Tibial artery (tissue), 4 donors: ENCODE measurements at regions of chr16 and their contacts with region 1.

Region 1: GRCh38 chr16:85258629-85259028 is 146.4 kb upstream of the CIBAR2 start:
- DNase-seq: no peak
- H3K4me3 ChIP-seq: no peak overlapping the region
- H3K27ac ChIP-seq: no peak overlapping the region
- H3K4me1 ChIP-seq: no peaks in the 10 kb centered on the region
- H3K27me3 ChIP-seq: peaks cover 0 to 11% of the 10 kb centered on the region in 2 donors
- CTCF ChIP-seq: no peak

Region 2: GRCh38 chr16:85114909-85115567 is 143.6 kb before region 1 on chr16:
- intact Hi-C with region 1: loop called (anchors 5 kb)
- DNase-seq: peak; percentile 90 to 91
- H3K4me3 ChIP-seq: peak overlapping the region in 1 of 2 donors; percentile 10
- H3K27ac ChIP-seq: no peak overlapping the region
- H3K4me1 ChIP-seq: peaks cover 0 to 9% (median 4%) of the 10 kb centered on the region in 4 donors
- H3K27me3 ChIP-seq: peaks cover 0 to 10% of the 10 kb centered on the region in 2 donors
- CTCF ChIP-seq: peak; percentile 97 to 99